ENCODE measurements at regions of chrX and their contacts with region 1.

Region 1: DNA sequence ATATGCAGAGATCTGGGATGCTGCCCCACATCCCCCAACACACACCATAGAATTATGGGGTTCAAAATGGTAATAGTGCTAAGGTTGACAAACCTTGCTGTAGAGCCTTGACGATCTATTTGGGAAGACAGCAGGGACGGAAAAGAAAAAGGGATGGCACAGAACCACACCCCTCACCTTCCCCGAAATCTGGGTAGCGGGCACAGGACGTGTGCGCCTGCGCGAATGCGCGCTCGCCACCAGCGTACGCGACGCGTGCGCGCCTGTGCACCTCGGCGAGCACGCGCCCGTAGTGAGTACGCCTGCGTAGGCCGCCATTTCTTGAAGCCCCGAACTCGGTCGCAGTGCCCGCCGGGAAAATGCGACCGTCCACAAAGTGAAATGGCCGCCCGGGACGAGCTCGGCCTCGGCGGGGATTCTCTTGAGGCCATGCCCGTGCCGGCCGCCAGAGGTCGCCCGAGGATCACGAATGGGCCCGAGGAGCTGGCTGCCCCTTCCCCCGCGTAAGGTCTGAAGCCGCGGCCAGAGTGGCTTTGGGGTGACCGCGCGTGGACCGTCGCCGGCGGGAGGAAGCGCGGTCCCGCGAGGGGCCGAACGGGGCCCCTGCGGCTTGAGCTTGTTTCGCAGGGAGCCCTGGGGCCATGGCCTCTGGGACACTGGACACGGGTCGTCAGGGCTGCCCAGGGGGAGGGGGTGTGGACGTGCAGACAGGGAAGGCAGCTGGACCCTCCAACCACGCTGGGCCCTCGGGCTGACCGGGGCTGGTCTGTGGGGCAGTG is 43.6 kb downstream of the ZNF185 start:
- DNase-seq: peak; percentile 92
- ATAC-seq: peak; percentile 96
- H3K4me3 Mint-ChIP-seq: peak overlapping the region; percentile 78
- H3K27ac Mint-ChIP-seq: peak overlapping the region; percentile 77
- H3K4me1 Mint-ChIP-seq: peaks cover 5% of the 10 kb centered on the region
- H3K27me3 Mint-ChIP-seq: no peaks in the 10 kb centered on the region

Region 2: DNA sequence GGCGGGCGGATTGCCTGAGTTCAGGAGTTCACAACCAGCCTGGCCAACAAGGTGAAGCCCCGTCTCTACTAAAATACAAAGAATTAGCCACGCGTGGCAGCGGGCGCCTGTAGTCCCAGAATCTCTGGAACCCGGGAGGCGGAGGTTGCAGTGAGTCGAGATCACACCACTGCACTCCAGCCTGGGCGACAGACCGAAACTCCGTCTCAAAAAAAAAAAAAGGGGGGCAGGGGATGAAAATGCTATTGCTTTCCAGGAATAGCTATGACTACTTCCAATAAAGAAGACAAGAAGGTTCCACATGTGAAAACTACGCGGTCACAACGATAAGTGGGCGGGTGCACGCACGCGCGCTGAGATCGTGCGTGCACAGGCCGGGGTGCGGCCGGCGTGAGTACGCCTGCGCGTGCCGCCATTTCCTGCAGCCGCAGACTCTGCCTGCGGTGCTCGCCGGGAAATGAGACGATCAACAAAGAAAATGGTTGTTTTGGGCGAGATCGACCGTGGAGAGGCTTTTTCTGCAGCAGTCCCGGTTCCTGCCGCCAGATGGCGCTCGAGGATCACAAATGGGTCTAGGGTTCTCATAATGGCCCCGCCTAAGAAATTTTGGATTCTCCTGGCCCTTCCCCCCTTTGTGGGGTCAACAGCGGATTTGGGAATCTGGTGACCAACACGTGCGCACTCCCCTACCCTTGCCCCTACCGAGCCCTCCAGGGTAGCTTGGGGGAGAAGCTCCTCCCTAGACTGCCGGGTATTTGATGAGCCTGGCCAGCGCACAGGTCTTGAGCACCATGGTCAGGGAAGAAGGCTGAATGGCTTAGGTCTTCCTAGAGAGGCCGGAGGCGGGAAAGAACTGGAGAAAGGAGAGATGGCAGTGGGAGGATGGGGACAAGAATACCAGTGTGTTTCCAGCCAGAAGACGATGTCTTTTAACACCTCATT is 17.3 kb after region 1 on chrX:
- CTCF ChIA-PET with region 1: interaction called, 14 read pairs
- POLR2A ChIA-PET with region 1: no interaction called
- intact Hi-C with region 1: loop called (anchors 1 kb)
- DNase-seq: peak; percentile 91
- ATAC-seq: peak; percentile 98
- H3K4me3 Mint-ChIP-seq: peak overlapping the region; percentile 52
- H3K27ac Mint-ChIP-seq: peak overlapping the region; percentile 91
- H3K4me1 Mint-ChIP-seq: peaks cover 6% of the 10 kb centered on the region
- H3K27me3 Mint-ChIP-seq: no peaks in the 10 kb centered on the region

Region 3: GRCh38 chrX:153333768-153334645 is 392.5 kb after region 1 on chrX and contains the start of gene ZNF275:
- CTCF ChIA-PET with region 1: no interaction called
- POLR2A ChIA-PET with region 1: no interaction called
- intact Hi-C with region 1: loop called (anchors 5 kb)
- DNase-seq: peak; percentile 87
- ATAC-seq: peak; percentile 93
- H3K4me3 Mint-ChIP-seq: peak within 1 kb of the TSS; percentile 80
- H3K27ac Mint-ChIP-seq: peak within 1 kb of the TSS; percentile 81
- H3K4me1 Mint-ChIP-seq: peaks cover 45% of the 10 kb centered on the region
- H3K27me3 Mint-ChIP-seq: no peaks in the 10 kb centered on the region
- total RNA-seq, gene ZNF275: 11.5 to 13.4 TPM

Region 4: DNA sequence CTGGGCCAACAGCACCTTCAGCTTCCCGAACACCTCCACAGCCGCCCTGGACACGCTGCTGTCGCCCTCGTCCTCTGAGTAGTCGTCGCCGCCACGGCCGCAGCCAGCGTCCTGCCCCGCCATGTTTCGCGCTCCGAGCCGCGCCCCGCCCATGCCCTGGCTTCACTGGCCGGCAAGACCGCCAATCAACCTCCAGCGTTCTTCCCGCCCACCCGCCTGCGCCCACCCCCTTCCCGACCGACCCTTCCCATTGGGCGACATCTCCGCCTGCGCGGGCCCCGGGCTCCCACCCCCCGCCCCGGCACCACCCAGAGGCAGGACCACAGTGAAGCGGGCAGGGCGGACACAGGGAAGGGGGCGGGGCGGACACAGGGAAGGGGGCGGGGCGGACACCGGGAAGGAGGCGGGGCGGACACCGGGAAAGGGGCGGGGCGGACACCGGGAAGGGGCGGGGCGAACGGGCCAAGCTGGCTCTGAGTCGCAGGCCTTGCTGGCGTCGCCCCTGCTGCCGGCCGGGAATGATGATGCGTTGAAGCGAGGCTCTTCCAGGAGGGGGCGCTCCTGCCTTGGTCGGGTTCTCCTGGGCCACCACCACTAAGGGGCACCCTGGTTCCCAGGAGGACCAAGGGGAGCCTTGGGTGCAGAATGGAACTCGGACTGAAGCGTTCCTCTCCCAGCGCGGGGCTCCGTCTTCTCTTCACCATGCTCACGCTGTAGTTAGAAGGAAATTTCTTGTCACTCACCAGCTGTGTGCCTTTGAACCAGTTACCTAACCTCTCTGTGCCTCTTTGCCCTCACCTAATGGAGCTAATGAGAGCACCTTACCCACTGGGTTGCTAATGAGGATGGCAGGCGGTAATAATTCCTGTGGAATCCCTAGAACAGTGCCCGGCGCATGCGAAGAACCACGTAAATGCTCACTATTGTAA is 529.2 kb after region 1 on chrX and contains the start of gene HAUS7:
- CTCF ChIA-PET with region 1: interaction called, 3 read pairs
- POLR2A ChIA-PET with region 1: no interaction called
- intact Hi-C with region 1: loop called (anchors 1 to 5 kb)
- DNase-seq: peak; percentile 93
- ATAC-seq: peak; percentile 91
- H3K4me3 Mint-ChIP-seq: peak within 1 kb of the TSS; percentile 78
- H3K27ac Mint-ChIP-seq: peak within 1 kb of the TSS; percentile 67
- H3K4me1 Mint-ChIP-seq: peaks cover 5% of the 10 kb centered on the region
- H3K27me3 Mint-ChIP-seq: no peaks in the 10 kb centered on the region
- total RNA-seq, gene HAUS7: 41.9 to 70.0 TPM

Region 5: GRCh38 chrX:153649178-153649914 is 707.8 kb after region 1 on chrX:
- CTCF ChIA-PET with region 1: interaction called, 3 read pairs
- POLR2A ChIA-PET with region 1: no interaction called
- intact Hi-C with region 1: loop called in 1 of 2 experiments (anchors 5 kb)
- DNase-seq: peak; percentile 64
- ATAC-seq: peak; percentile 84
- H3K4me3 Mint-ChIP-seq: no peak overlapping the region
- H3K27ac Mint-ChIP-seq: no peak overlapping the region
- H3K4me1 Mint-ChIP-seq: no peaks in the 10 kb centered on the region
- H3K27me3 Mint-ChIP-seq: peaks cover 17% of the 10 kb centered on the region

Region 6: GRCh38 chrX:153667956-153668396 is 726.5 kb after region 1 on chrX:
- CTCF ChIA-PET with region 1: interaction called, 20 read pairs
- POLR2A ChIA-PET with region 1: no interaction called
- intact Hi-C with region 1: no loop called
- DNase-seq: peak; percentile 88
- ATAC-seq: peak; percentile 92
- H3K4me3 Mint-ChIP-seq: peak overlapping the region; percentile 70
- H3K27ac Mint-ChIP-seq: no peak overlapping the region
- H3K4me1 Mint-ChIP-seq: peaks cover 7% of the 10 kb centered on the region
- H3K27me3 Mint-ChIP-seq: peaks cover 7% of the 10 kb centered on the region